ENCODE measurements at regions of chr2 and their contacts with region 1.

Region 1: DNA sequence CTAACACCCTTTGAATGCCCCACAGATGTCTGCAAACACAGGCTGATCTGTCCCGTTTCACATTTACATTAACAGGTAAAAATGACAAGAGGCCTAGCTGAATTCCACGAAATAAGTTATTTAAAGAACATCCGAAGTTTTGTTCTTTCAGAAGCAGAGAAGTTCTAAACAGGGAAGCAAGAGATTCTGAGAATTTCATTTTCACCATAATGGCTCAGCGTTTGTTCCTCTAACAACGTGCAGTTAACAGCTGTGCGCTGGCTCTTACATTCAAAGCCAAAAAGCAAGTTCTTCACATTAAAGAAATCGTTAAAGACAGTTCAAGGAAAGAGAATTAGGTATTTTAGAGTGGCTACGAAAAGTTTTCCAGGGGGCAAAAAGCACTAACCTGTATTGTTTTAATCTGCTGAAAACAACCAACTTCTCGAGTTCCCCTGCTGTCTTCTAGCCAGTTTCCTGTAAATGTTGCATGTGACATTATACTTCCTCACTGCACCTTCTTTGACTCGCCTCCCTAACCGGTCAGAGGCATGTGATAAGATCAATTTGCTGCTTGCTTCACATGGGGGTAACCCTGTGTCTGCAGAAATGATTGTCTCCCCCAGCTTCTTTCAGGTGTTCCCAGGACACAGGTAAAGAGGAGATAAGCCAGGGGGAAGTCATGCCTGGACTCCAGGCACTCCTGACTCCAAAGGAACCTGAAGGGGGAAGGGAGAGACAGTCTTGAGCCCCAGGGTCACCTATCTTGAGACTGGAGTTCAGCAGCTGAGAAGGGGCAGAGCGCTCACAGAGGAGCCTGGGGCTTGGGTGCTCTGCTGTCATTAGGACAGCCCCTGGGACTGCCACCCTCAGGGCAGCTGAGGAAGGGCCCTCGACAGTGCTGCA is 36.8 kb upstream of the WIPF1 start:
- DNase-seq: peak; percentile 81
- ATAC-seq: peak; percentile 83
- H3K4me3 ChIP-seq: peak overlapping the region; percentile 61 to 99 (median 77)
- H3K4me3 Mint-ChIP-seq: peak overlapping the region; percentile 96
- H3K27ac ChIP-seq: peak overlapping the region; percentile 83 to 87
- H3K27ac Mint-ChIP-seq: peak overlapping the region; percentile 92
- H3K4me1 ChIP-seq: peaks cover 43 to 49% of the 10 kb centered on the region in 2 donors
- H3K4me1 Mint-ChIP-seq: peaks cover 60% of the 10 kb centered on the region
- H3K27me3 ChIP-seq: no peaks in the 10 kb centered on the region
- H3K27me3 Mint-ChIP-seq: no peaks in the 10 kb centered on the region
- CTCF ChIP-seq: peak; percentile 13

Region 2: GRCh38 chr2:174477759-174478158 is 156.6 kb before region 1 on chr2:
- CTCF ChIA-PET with region 1: no interaction called
- POLR2A ChIA-PET with region 1: no interaction called
- intact Hi-C with region 1: no loop called
- DNase-seq: no peak
- ATAC-seq: no peak
- H3K4me3 ChIP-seq: no peak overlapping the region
- H3K4me3 Mint-ChIP-seq: no peak overlapping the region
- H3K27ac ChIP-seq: no peak overlapping the region
- H3K27ac Mint-ChIP-seq: no peak overlapping the region
- H3K4me1 ChIP-seq: no peaks in the 10 kb centered on the region
- H3K4me1 Mint-ChIP-seq: no peaks in the 10 kb centered on the region
- H3K27me3 ChIP-seq: no peaks in the 10 kb centered on the region
- H3K27me3 Mint-ChIP-seq: no peaks in the 10 kb centered on the region
- CTCF ChIP-seq: no peak

Region 3: GRCh38 chr2:174561283-174561971 is 72.9 kb before region 1 on chr2:
- CTCF ChIA-PET with region 1: no interaction called
- POLR2A ChIA-PET with region 1: no interaction called
- intact Hi-C with region 1: no loop called
- DNase-seq: no peak
- ATAC-seq: no peak
- H3K4me3 ChIP-seq: no peak overlapping the region
- H3K4me3 Mint-ChIP-seq: no peak overlapping the region
- H3K27ac ChIP-seq: peak overlapping the region in 1 of 2 donors; percentile 53
- H3K27ac Mint-ChIP-seq: no peak overlapping the region
- H3K4me1 ChIP-seq: no peaks in the 10 kb centered on the region
- H3K4me1 Mint-ChIP-seq: no peaks in the 10 kb centered on the region
- H3K27me3 ChIP-seq: no peaks in the 10 kb centered on the region
- H3K27me3 Mint-ChIP-seq: no peaks in the 10 kb centered on the region
- CTCF ChIP-seq: no peak

Region 4: DNA sequence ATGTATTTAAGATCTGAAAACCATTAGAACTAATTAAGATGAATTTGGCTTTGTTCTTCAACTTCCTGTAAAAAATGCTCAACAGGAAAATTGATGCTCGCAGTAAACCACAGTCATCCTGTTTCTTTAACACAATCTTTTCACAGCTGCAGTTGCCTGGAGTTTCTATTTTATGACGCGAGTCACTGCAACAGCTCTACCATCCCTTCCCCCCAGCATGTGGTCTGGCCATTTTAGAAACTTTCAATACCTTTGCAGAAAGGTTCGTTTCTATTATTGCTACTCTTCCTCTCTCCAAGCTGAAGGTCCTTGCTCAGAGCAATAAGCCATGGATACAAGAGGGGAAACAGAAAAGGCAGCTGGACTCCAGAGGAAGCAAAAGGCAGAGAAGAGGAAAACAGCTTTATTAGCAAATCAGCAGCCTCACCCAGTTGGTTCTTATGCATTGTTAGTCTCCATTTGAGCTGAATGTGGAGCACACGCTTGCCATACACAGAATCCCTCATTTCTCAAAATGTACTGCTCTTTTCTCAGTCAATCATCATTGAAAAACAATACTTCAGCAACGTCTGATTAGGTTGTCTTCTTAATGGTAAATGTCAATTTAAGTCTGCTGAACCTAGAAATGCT is 40.7 kb before region 1 on chr2:
- CTCF ChIA-PET with region 1: interaction called, 7 read pairs
- POLR2A ChIA-PET with region 1: interaction called, 24 read pairs
- intact Hi-C with region 1: no loop called
- DNase-seq: peak; percentile 88
- ATAC-seq: peak; percentile 66
- H3K4me3 ChIP-seq: peak overlapping the region; percentile 53 to 92 (median 71)
- H3K4me3 Mint-ChIP-seq: peak overlapping the region; percentile 93
- H3K27ac ChIP-seq: peak overlapping the region; percentile 93 to 98
- H3K27ac Mint-ChIP-seq: peak overlapping the region; percentile 96
- H3K4me1 ChIP-seq: peaks cover 63 to 65% of the 10 kb centered on the region in 2 donors
- H3K4me1 Mint-ChIP-seq: peaks cover 65% of the 10 kb centered on the region
- H3K27me3 ChIP-seq: no peaks in the 10 kb centered on the region
- H3K27me3 Mint-ChIP-seq: no peaks in the 10 kb centered on the region
- CTCF ChIP-seq: no peak

Region 5: GRCh38 chr2:174603280-174603679 is 31.1 kb before region 1 on chr2:
- CTCF ChIA-PET with region 1: interaction called, 10 read pairs
- POLR2A ChIA-PET with region 1: interaction called, 14 read pairs
- intact Hi-C with region 1: loop called (anchors 1 kb)
- DNase-seq: peak; percentile 69
- ATAC-seq: no peak
- H3K4me3 ChIP-seq: no peak overlapping the region
- H3K4me3 Mint-ChIP-seq: no peak overlapping the region
- H3K27ac ChIP-seq: peak overlapping the region in 1 of 2 donors; percentile 8
- H3K27ac Mint-ChIP-seq: peak overlapping the region; percentile 71
- H3K4me1 ChIP-seq: peaks cover 69 to 74% of the 10 kb centered on the region in 2 donors
- H3K4me1 Mint-ChIP-seq: peaks cover 86% of the 10 kb centered on the region
- H3K27me3 ChIP-seq: no peaks in the 10 kb centered on the region
- H3K27me3 Mint-ChIP-seq: no peaks in the 10 kb centered on the region
- CTCF ChIP-seq: peak; percentile 71

Region 6: GRCh38 chr2:174615871-174616436 is 18.4 kb before region 1 on chr2:
- CTCF ChIA-PET with region 1: interaction called, 10 read pairs
- POLR2A ChIA-PET with region 1: no interaction called
- intact Hi-C with region 1: no loop called
- DNase-seq: no peak
- ATAC-seq: no peak
- H3K4me3 ChIP-seq: peak overlapping the region in 2 of 5 experiments; percentile 3 to 31
- H3K4me3 Mint-ChIP-seq: peak overlapping the region; percentile 81
- H3K27ac ChIP-seq: peak overlapping the region; percentile 47 to 73
- H3K27ac Mint-ChIP-seq: peak overlapping the region; percentile 87
- H3K4me1 ChIP-seq: peaks cover 68 to 77% of the 10 kb centered on the region in 2 donors
- H3K4me1 Mint-ChIP-seq: peaks cover 83% of the 10 kb centered on the region
- H3K27me3 ChIP-seq: no peaks in the 10 kb centered on the region
- H3K27me3 Mint-ChIP-seq: no peaks in the 10 kb centered on the region
- CTCF ChIP-seq: no peak

Region 7: GRCh38 chr2:174682578-174683391 is 48.4 kb after region 1 on chr2:
- CTCF ChIA-PET with region 1: interaction called, 37 read pairs
- POLR2A ChIA-PET with region 1: interaction called, 10 read pairs
- intact Hi-C with region 1: loop called (anchors 1 kb)
- DNase-seq: peak; percentile 72
- ATAC-seq: peak; percentile 70
- H3K4me3 ChIP-seq: peak overlapping the region; percentile 67 to 87 (median 72)
- H3K4me3 Mint-ChIP-seq: peak overlapping the region; percentile 93
- H3K27ac ChIP-seq: peak overlapping the region in 1 of 2 donors; percentile 67
- H3K27ac Mint-ChIP-seq: peak overlapping the region; percentile 86
- H3K4me1 ChIP-seq: peaks cover 8 to 14% of the 10 kb centered on the region in 2 donors
- H3K4me1 Mint-ChIP-seq: peaks cover 21% of the 10 kb centered on the region
- H3K27me3 ChIP-seq: no peaks in the 10 kb centered on the region
- H3K27me3 Mint-ChIP-seq: no peaks in the 10 kb centered on the region
- CTCF ChIP-seq: no peak

Region 8: GRCh38 chr2:174688079-174688478 is 53.7 kb after region 1 on chr2:
- CTCF ChIA-PET with region 1: interaction called, 37 read pairs
- POLR2A ChIA-PET with region 1: interaction called, 10 read pairs
- intact Hi-C with region 1: loop called (anchors 1 kb)
- DNase-seq: peak; percentile 65
- ATAC-seq: peak; percentile 42
- H3K4me3 ChIP-seq: no peak overlapping the region
- H3K4me3 Mint-ChIP-seq: no peak overlapping the region
- H3K27ac ChIP-seq: no peak overlapping the region
- H3K27ac Mint-ChIP-seq: no peak overlapping the region
- H3K4me1 ChIP-seq: peaks cover 7 to 8% of the 10 kb centered on the region in 2 donors
- H3K4me1 Mint-ChIP-seq: peaks cover 9% of the 10 kb centered on the region
- H3K27me3 ChIP-seq: peaks cover 0 to 14% (median 0%) of the 10 kb centered on the region in 4 experiments
- H3K27me3 Mint-ChIP-seq: peaks cover 3% of the 10 kb centered on the region
- CTCF ChIP-seq: peak; percentile 76